ENCODE measurements at regions of chr1 and their contacts with region 1.

Region 1: GRCh38 chr1:114716304-114717170 is at the start of gene NRAS:
- DNase-seq: peak; percentile 97
- ATAC-seq: peak; percentile 91
- H3K4me3 Mint-ChIP-seq: peak within 1 kb of the TSS; percentile 95
- H3K27ac Mint-ChIP-seq: peak within 1 kb of the TSS; percentile 97
- H3K4me1 Mint-ChIP-seq: peaks cover 30% of the 10 kb centered on the region
- H3K27me3 Mint-ChIP-seq: no peaks in the 10 kb centered on the region
- total RNA-seq, gene NRAS: 53.0 to 55.0 TPM

Region 2: DNA sequence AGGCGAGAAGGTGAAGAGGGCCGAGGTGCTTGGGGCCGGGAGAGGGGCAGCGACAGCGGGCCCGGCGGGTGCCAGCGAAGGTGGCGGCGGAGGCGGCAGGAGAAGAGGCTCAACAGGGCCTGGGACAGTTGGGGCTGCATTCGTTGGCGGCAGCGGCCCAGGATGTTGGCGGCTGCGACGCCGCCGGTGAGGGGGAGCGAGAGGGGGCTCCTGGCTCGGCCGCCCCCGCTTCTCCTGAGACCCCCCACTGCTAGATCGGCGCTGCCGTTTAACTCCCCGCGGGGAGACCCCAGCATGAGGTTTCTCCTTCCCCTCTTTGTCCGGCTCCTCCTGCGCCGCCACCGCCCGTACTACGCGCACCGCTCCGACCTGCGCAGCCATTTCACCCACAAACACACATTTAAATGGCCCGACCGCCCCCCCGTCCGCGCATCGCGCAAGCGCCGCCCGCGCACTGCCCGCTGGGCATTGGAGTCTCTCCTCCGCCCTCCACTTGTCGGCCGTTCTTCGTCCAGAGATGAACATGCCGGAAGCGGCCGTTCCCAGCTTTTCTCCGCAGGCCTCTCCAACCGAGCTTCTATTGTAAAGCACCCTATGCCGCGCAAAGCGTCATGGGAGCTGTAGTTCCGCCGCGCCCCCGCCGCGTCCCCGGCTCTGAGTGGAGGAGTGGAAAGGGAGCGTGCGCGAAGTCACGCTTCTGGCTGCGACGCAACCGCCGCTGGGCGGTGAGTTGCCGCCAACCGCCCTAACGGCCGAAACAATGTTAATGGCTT is 904.5 kb before region 1 on chr1 and contains the start of gene RSBN1:
- CTCF ChIA-PET with region 1: no interaction called
- POLR2A ChIA-PET with region 1: no interaction called
- intact Hi-C with region 1: loop called in 1 of 2 experiments (anchors 5 kb)
- DNase-seq: peak; percentile 99
- ATAC-seq: peak; percentile 97
- H3K4me3 Mint-ChIP-seq: peak within 1 kb of the TSS; percentile 97
- H3K27ac Mint-ChIP-seq: peak within 1 kb of the TSS; percentile 97
- H3K4me1 Mint-ChIP-seq: peaks cover 33% of the 10 kb centered on the region
- H3K27me3 Mint-ChIP-seq: no peaks in the 10 kb centered on the region
- total RNA-seq, gene RSBN1: 22.1 to 24.3 TPM

Region 3: GRCh38 chr1:113871597-113872113 is 844.9 kb before region 1 on chr1 and contains the start of gene PTPN22:
- CTCF ChIA-PET with region 1: no interaction called
- POLR2A ChIA-PET with region 1: no interaction called
- intact Hi-C with region 1: loop called in 1 of 2 experiments (anchors 10 kb)
- DNase-seq: peak; percentile 89
- ATAC-seq: peak; percentile 84
- H3K4me3 Mint-ChIP-seq: peak within 1 kb of the TSS; percentile 84
- H3K27ac Mint-ChIP-seq: peak within 1 kb of the TSS; percentile 99
- H3K4me1 Mint-ChIP-seq: peaks cover 72% of the 10 kb centered on the region
- H3K27me3 Mint-ChIP-seq: no peaks in the 10 kb centered on the region
- total RNA-seq, gene PTPN22: 42.4 to 52.6 TPM

Region 4: DNA sequence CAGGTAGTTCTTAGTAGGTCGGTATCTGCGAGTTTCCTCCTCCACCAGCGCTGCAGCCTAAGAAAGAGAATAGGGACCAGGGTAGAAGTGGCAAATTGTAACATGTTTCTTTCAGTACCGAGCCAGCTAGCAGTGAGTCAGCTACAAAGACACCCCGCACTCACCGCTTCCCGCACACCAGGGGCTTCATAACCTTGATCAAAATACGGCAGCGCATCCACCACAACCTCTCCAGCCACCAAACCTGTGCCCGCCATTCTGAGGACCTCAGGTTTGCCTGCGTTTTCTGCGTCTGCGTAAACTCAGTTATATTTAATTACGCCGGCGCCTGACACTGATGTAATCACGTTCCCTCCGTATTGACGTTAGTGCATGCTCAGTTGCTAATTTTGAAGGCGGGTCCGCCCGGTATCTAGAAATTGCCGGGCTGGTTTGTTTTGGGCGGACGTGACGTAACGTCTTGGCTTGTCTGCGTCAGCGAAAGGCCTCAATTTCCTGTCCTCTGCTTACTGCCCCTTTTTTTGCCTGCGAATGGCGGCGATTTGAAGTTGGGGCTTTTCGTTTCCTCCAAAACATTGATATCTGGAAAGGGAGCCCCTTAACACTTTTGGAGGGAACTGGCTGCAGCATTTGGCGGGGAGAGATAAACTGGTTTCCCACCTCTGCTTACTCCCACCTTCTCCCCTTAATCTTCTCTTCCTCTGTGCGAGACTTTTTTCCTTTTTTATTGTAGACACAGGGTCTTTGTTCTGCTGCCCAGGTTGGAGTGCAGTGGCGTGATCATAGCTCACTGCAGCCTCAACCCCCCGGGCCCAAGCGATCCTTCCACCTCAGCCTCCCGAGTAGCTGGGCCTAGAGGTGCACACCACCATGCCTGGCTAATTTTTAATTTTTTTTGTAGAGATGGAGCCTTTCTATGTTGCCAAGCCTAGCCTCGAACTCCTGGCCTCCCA is 134.9 kb before region 1 on chr1 and contains the start of gene BCAS2:
- CTCF ChIA-PET with region 1: no interaction called
- POLR2A ChIA-PET with region 1: interaction called, 5 read pairs
- intact Hi-C with region 1: loop called (anchors 1 kb)
- DNase-seq: peak; percentile 97
- ATAC-seq: peak; percentile 99
- H3K4me3 Mint-ChIP-seq: peak within 1 kb of the TSS; percentile 97
- H3K27ac Mint-ChIP-seq: peak within 1 kb of the TSS; percentile 98
- H3K4me1 Mint-ChIP-seq: peaks cover 29% of the 10 kb centered on the region
- H3K27me3 Mint-ChIP-seq: peaks cover 1% of the 10 kb centered on the region
- total RNA-seq, gene BCAS2: 54.1 to 54.8 TPM

Region 5: DNA sequence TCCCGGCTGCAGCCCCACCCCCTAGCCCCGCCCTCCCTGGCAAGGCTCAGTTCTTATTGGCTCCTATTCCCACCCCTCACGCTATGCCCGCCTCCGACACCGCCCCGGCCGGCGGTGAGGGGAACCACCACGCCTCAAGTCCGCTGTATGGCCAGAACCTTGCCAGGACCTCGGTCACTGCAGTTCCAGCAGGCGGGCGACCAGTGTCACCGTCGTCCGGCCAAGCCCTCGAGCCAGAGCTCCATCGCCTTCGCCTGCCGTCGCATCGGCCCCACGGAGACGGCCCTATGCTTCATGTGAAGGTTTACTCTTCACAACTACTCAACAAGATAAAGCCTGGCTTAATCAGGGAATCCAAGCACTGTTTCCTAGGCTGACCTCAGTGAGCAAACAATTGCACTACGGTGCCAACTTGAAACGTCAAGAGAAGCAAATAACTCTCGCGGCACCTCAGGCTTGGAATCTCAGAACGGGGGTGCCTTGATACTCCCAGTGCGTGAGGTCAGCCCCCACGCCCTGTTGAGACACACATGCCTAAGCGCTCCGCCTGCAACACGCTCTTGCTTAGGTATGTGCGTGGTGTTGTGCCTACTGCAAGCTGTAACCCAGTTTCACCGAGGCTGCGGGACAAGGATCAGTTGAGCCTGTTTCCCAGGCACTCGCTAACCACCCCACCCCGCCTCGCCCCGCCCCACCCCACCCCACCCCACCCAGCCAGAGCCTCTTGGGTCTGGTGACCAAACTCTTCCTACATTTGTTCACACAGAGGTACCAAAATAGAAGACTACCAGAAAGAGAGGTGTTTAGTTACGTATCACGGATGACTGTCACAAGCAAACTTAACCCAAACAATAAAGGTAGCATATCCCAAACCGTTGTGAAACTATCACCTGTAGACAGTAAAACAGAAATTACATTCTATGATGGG is 46.2 kb before region 1 on chr1:
- CTCF ChIA-PET with region 1: no interaction called
- POLR2A ChIA-PET with region 1: no interaction called
- intact Hi-C with region 1: loop called (anchors 1 to 2 kb)
- DNase-seq: peak; percentile 93
- ATAC-seq: peak; percentile 97
- H3K4me3 Mint-ChIP-seq: peak overlapping the region; percentile 84
- H3K27ac Mint-ChIP-seq: peak overlapping the region; percentile 63
- H3K4me1 Mint-ChIP-seq: peaks cover 11% of the 10 kb centered on the region
- H3K27me3 Mint-ChIP-seq: peaks cover 15% of the 10 kb centered on the region

Region 6: DNA sequence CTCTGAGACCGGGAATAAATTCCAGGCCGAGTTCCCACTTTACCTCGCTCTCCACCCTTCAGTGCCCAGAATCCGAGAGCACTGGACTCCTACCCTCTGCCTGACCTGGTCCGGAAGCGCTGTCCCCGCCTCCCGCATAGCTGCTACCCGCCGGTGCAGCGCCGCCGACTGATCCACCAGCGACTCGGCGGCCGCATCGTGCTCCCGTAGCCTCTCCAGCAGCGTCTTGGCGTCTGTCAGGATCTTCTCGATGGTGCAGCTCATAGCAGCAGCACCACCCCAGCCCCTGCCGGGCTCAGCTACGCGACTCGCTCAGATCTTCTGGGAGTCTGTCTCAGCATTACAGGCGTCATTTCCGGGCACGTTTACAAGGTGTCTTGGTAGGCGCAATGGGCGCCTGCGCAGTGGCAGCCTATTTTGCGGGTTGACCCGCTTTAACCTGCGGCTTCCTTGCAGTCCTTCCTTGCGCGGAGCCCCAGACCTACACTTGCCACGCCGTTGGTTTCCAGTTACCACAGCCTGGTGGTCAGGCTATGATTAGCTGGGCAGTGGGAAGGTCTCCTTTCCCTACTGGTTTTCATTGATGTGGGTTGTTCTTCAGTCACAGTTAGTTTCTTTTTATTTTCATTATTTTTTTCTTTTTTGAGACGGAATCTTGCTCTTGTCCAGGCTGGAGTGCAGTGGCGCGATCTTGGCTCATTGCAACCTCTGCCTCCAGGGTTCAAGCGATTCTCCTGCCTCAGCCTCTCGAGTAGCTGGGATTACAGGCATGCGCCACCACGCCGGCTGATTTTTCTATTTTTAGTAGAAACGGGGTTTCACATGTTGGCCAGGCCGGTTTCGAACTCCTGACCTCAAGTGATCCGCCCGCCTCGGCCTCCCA is 64.0 kb after region 1 on chr1 and contains the start of gene SIKE1:
- CTCF ChIA-PET with region 1: interaction called, 4 read pairs
- POLR2A ChIA-PET with region 1: interaction called, 3 read pairs
- intact Hi-C with region 1: loop called (anchors 1 to 2 kb)
- DNase-seq: peak; percentile 96
- ATAC-seq: peak; percentile 100
- H3K4me3 Mint-ChIP-seq: peak within 1 kb of the TSS; percentile 100
- H3K27ac Mint-ChIP-seq: peak within 1 kb of the TSS; percentile 97
- H3K4me1 Mint-ChIP-seq: peaks cover 21% of the 10 kb centered on the region
- H3K27me3 Mint-ChIP-seq: no peaks in the 10 kb centered on the region
- total RNA-seq, gene SIKE1: 56.9 to 67.2 TPM

Region 7: GRCh38 chr1:115062542-115063011 is 346.0 kb after region 1 on chr1:
- CTCF ChIA-PET with region 1: no interaction called
- POLR2A ChIA-PET with region 1: no interaction called
- intact Hi-C with region 1: loop called in 1 of 2 experiments (anchors 1 kb)
- DNase-seq: peak; percentile 93
- ATAC-seq: peak; percentile 88
- H3K4me3 Mint-ChIP-seq: peak overlapping the region; percentile 23
- H3K27ac Mint-ChIP-seq: peak overlapping the region; percentile 75
- H3K4me1 Mint-ChIP-seq: peaks cover 40% of the 10 kb centered on the region
- H3K27me3 Mint-ChIP-seq: no peaks in the 10 kb centered on the region

Measured in activated CD4-positive, alpha-beta T cell treated with anti-CD3 and anti-CD28 coated beads for 36 hours (primary cell).